ENCODE measurements at regions of chr6 and their contacts with region 1.

Region 1: GRCh38 chr6:29376003-29376402 is 912 bp upstream of the OR12D3 start:
- DNase-seq: peak; percentile 29
- H3K4me3 Mint-ChIP-seq: no peak overlapping the region
- H3K27ac Mint-ChIP-seq: no peak overlapping the region
- H3K4me1 Mint-ChIP-seq: no peaks in the 10 kb centered on the region
- H3K27me3 Mint-ChIP-seq: no peaks in the 10 kb centered on the region
- CTCF ChIP-seq: no peak

Region 2: GRCh38 chr6:29589423-29590048 is 213.5 kb after region 1 on chr6:
- CTCF ChIA-PET with region 1: interaction called, 3 read pairs
- intact Hi-C with region 1: loop called (anchors 1 kb)
- DNase-seq: peak; percentile 73
- H3K4me3 Mint-ChIP-seq: no peak overlapping the region
- H3K27ac Mint-ChIP-seq: no peak overlapping the region
- H3K4me1 Mint-ChIP-seq: peaks cover 28% of the 10 kb centered on the region
- H3K27me3 Mint-ChIP-seq: no peaks in the 10 kb centered on the region
- CTCF ChIP-seq: peak; percentile 96

Region 3: GRCh38 chr6:29632789-29633533 is 257.0 kb after region 1 on chr6 and contains the start of gene GABBR1:
- CTCF ChIA-PET with region 1: interaction called, 5 read pairs
- intact Hi-C with region 1: loop called (anchors 1 kb)
- DNase-seq: peak; percentile 90
- H3K4me3 Mint-ChIP-seq: peak within 1 kb of the TSS; percentile 73
- H3K27ac Mint-ChIP-seq: peak within 1 kb of the TSS; percentile 9
- H3K4me1 Mint-ChIP-seq: peaks cover 34% of the 10 kb centered on the region
- H3K27me3 Mint-ChIP-seq: peaks cover 15% of the 10 kb centered on the region
- CTCF ChIP-seq: no peak
- total RNA-seq, gene GABBR1: 35.3 and 42.2 TPM in 2 replicates

Region 4: DNA sequence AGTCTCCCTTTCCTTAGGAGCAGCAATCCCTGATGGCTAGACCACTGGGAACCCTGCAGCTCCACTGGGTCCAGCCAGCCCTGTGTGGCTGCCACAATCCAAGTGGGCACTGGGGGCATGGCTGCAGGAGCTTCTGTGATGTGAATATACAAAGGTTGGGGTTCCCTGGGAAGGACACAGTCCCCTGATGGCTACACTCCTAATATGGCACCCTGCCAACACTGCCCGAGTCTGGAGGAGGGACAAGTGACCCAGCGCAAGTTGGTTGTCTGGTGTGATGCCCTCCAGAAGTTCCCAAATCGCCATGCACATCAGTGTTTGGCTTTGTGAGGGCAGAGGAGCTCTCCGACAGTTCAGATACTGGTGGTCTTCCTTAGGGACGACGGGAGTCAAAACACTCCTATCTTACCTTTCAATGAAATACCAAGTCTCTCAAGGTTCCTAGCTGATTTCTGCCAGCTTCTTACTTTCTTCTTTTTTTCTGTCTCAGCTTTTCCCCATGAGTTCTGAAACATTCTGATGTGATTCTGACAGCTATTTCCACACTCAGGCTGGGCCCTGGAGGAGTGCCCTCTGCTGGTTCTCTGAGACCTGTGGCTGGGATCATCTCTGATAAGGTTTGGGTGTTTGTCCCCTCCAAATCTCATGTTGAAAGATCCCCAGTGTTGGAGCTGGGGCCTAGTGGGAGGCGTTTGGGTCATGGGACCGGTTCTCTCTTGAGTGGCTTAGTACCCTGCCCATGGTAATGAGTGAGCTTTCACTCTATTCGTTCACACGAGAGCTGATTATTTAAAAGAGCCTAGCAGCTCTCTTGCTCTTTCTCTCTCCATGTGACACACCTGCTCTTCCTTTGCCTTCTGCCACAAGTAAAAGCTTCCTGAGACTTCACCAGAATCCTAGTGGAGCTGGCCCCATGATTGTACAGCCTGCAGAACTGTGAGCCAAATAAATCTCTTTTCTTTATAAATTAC is 320.4 kb after region 1 on chr6:
- CTCF ChIA-PET with region 1: interaction called, 5 read pairs
- intact Hi-C with region 1: loop called (anchors 5 kb)
- DNase-seq: peak; percentile 64
- H3K4me3 Mint-ChIP-seq: no peak overlapping the region
- H3K27ac Mint-ChIP-seq: no peak overlapping the region
- H3K4me1 Mint-ChIP-seq: peaks cover 8% of the 10 kb centered on the region
- H3K27me3 Mint-ChIP-seq: no peaks in the 10 kb centered on the region
- CTCF ChIP-seq: peak; percentile 83